PC-9 (cell line): ENCODE measurements at regions of chr14 and their contacts with region 1.

Region 1: DNA sequence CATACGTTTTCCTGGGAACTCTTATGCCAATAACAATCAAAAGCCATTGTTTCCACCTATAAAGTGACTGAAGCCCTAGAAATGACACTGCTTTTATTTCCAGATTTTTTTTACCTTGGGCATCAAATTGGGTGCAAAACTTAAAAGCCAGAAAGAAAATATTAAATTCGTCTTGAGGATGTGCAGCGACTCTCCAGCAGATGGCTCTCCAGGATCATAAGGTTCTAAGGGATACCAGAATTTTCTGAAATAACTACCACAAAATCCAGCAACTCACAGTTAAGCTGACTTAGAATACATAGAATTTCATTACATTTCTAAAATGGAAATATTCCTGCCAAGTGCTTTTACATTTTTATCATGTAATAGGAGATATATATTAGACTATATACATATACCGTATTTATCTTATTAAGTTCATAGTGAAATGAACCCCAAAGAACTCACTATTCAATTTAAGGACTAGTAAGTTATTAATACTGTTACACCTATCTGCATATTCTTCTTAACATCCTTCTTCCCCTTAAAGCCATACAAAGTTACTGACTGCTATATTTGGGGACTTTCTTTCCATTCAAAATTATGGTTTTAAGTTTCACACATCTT is 44.0 kb downstream of the ARMH4 start:
- DNase-seq: peak; percentile 30 to 49
- H3K4me3 ChIP-seq: no peak overlapping the region
- H3K27ac ChIP-seq: no peak overlapping the region
- H3K4me1 ChIP-seq: no peaks in the 10 kb centered on the region
- H3K27me3 ChIP-seq: 0 out of 2 replicates have a peak, but pooled peaks cover 9% of the 10 kb centered on the region
- CTCF ChIP-seq: peak; percentile 84

Region 2: GRCh38 chr14:58091883-58092630 is 16.0 kb before region 1 on chr14:
- CTCF ChIA-PET with region 1: no interaction called
- POLR2A ChIA-PET with region 1: no interaction called
- intact Hi-C with region 1: no loop called
- DNase-seq: no peak
- H3K4me3 ChIP-seq: no peak overlapping the region
- H3K27ac ChIP-seq: no peak overlapping the region
- H3K4me1 ChIP-seq: no peaks in the 10 kb centered on the region
- H3K27me3 ChIP-seq: peaks cover 3% of the 10 kb centered on the region; the same call in 1 of the 2 replicates
- CTCF ChIP-seq: no peak

Region 3: DNA sequence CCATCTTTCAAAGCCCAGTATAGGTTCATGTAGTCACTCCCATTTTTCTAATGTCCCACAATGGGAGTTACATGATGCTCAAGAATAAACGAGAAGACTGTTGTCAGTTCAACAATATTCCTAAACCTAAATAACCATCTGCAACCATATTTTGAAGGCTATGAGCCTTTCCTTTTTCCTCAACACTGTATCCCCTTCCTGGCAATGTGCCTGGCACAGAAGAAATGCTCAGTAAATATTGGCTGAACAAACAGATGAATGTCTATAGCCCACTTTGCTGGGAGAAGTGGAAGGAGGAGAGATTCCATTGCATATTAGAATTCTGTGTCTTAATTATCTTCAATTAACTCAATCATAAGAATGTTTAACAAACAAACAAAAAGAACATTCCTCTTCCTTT is 37.9 kb after region 1 on chr14:
- CTCF ChIA-PET with region 1: no interaction called
- POLR2A ChIA-PET with region 1: interaction called, 11 read pairs
- intact Hi-C with region 1: no loop called
- DNase-seq: no peak
- H3K4me3 ChIP-seq: no peak overlapping the region
- H3K27ac ChIP-seq: no peak overlapping the region
- H3K4me1 ChIP-seq: no peaks in the 10 kb centered on the region
- H3K27me3 ChIP-seq: peaks cover 47% of the 10 kb centered on the region
- CTCF ChIP-seq: no peak

Region 4: DNA sequence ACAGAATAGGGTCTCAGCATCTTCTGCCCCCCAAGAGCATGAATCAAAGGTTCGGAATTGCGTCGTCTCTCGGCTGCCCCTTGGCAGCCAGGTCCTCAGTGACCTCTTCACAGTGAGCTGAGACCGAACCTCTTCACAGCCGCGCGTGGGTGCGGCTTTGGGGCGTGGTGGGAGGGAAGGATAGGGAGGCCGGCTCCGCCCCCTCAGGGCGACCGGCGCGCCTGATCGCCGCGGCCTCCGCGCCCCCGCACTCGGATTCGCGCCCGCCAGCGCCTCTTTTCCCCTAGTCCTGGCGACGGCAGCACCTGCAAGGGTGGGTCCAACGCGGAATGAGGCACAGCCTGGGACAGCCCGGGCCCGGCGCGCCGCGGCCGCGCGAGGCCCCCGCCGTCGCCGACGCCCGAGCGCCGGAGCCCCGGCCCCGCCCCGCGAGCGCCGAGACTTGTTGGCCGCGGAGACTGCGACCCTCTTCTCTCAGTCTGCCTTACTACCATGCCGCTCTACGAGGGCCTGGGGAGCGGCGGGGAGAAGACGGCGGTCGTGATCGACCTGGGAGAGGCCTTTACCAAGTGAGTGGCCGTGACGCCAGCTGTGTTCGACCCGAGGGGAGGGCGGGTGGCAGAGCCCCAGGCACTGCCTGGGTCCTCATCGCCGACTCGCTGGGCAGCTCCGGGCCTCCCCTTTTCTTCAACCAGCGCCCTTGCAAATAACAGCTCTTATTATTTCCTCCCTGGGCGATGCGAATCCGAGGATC is 91.9 kb after region 1 on chr14 and contains the start of gene ACTR10:
- CTCF ChIA-PET with region 1: no interaction called
- POLR2A ChIA-PET with region 1: no interaction called
- intact Hi-C with region 1: no loop called
- DNase-seq: peak; percentile 59 to 90
- H3K4me3 ChIP-seq: peak within 1 kb of the TSS; percentile 100
- H3K27ac ChIP-seq: peak within 1 kb of the TSS; percentile 65
- H3K4me1 ChIP-seq: peaks cover 18% of the 10 kb centered on the region
- H3K27me3 ChIP-seq: no peaks in the 10 kb centered on the region
- CTCF ChIP-seq: no peak
- total RNA-seq, gene ACTR10: 30.4 and 36.3 TPM in 2 replicates

Region 5: DNA sequence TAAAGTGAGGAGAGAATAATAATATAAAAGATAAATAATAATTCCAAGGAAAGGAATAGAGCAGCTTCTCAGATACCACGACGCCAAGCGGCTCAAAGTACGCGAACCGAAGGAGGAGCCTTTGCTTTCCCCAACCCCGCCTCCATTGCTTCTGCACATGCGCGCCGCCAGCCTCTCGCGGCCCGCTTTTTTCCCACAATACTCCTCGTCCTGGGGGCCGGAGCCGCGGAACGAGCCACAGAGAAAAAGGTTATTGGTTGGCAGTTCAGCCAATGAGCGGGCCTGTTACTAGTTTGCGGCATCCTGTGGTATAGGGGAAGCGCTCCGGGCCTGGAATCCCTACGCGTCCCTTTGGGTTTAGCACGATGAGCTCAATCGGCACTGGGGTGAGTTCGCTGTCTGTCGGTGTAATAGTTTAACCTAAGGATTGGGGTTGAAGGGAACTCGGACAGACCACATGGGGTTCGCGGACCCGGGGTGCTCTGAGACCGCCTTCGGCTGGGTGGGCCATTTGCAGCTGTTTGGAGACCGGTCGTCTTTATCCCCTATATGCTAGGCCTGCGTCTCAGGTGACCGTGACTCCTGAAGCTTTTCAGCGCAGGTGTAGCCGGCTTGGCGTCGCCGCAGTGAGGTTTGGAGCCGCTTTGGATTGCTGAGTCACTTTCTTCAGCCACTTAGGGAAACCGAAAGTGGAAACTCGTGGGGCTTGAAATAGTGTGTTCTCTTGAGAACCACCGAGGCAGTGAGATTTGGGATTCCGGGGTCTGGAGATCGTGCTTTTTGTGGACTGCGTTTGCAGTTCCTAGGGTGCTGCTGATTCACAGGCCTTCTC is 136.7 kb after region 1 on chr14 and contains the start of gene PSMA3:
- CTCF ChIA-PET with region 1: no interaction called
- POLR2A ChIA-PET with region 1: no interaction called
- intact Hi-C with region 1: loop called (anchors 10 kb)
- DNase-seq: peak; percentile 93 to 96
- H3K4me3 ChIP-seq: peak within 1 kb of the TSS; percentile 87
- H3K27ac ChIP-seq: peak within 1 kb of the TSS; percentile 97
- H3K4me1 ChIP-seq: peaks cover 28% of the 10 kb centered on the region
- H3K27me3 ChIP-seq: no peaks in the 10 kb centered on the region
- CTCF ChIP-seq: no peak
- total RNA-seq, gene PSMA3: 202 and 277 TPM in 2 replicates

Region 6: DNA sequence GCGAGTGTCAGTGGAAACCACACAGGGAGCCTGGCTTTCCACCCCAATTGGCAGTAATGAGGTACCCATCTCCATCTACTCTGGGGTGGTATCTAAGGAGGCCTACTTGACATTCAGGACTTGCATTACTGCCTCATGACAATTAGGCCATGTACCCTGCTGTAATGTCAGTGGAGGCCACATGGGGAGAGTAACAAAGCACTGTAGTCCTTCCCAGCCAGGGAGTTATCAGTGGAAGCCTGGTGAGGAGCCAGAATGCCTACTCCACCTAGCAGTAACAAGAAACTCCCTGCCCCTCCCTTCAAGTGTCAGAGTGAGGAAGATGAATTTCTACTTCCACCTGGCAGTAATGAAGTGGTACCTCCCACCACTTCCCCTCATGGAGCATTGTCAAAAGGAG is 306.8 kb after region 1 on chr14:
- CTCF ChIA-PET with region 1: interaction called, 11 read pairs
- POLR2A ChIA-PET with region 1: no interaction called
- intact Hi-C with region 1: no loop called
- DNase-seq: no peak
- H3K4me3 ChIP-seq: no peak overlapping the region
- H3K27ac ChIP-seq: no peak overlapping the region
- H3K4me1 ChIP-seq: no peaks in the 10 kb centered on the region
- H3K27me3 ChIP-seq: no peaks in the 10 kb centered on the region
- CTCF ChIP-seq: no peak

Region 7: DNA sequence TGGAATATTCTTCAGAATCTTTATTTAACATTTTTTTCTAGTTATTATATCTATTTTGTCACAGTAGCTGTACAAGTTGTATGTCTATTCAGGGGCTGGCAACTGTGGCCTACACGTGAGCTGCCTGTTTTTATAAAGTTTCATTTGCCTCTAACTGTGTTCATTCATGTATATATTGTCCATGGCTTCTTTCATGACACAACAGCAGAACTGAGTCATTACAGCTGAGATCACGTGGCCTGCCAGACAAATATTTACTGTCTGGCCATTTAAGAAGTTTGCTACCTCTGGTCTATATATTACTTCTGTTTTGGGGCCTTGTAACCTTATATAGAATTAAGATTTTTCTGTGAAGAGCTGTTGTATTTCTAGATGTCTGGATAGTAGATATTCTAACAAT is 357.4 kb after region 1 on chr14:
- CTCF ChIA-PET with region 1: no interaction called
- POLR2A ChIA-PET with region 1: no interaction called
- intact Hi-C with region 1: loop called (anchors 5 kb)
- DNase-seq: no peak
- H3K4me3 ChIP-seq: no peak overlapping the region
- H3K27ac ChIP-seq: no peak overlapping the region
- H3K4me1 ChIP-seq: no peaks in the 10 kb centered on the region
- H3K27me3 ChIP-seq: no peaks in the 10 kb centered on the region
- CTCF ChIP-seq: no peak